Calu3 (cell line): ENCODE measurements at regions of chr1 and their contacts with region 1.

Region 1: GRCh38 chr1:68232354-68233148 is at the start of gene WLS:
- DNase-seq: peak; percentile 65
- H3K4me3 Mint-ChIP-seq: peak within 1 kb of the TSS; percentile 96
- H3K27ac Mint-ChIP-seq: peak within 1 kb of the TSS; percentile 17
- H3K4me1 Mint-ChIP-seq: peaks cover 19% of the 10 kb centered on the region
- H3K27me3 Mint-ChIP-seq: no peaks in the 10 kb centered on the region
- CTCF ChIP-seq: no peak
- total RNA-seq, gene WLS: 50.9 and 57.3 TPM in 2 replicates

Region 2: DNA sequence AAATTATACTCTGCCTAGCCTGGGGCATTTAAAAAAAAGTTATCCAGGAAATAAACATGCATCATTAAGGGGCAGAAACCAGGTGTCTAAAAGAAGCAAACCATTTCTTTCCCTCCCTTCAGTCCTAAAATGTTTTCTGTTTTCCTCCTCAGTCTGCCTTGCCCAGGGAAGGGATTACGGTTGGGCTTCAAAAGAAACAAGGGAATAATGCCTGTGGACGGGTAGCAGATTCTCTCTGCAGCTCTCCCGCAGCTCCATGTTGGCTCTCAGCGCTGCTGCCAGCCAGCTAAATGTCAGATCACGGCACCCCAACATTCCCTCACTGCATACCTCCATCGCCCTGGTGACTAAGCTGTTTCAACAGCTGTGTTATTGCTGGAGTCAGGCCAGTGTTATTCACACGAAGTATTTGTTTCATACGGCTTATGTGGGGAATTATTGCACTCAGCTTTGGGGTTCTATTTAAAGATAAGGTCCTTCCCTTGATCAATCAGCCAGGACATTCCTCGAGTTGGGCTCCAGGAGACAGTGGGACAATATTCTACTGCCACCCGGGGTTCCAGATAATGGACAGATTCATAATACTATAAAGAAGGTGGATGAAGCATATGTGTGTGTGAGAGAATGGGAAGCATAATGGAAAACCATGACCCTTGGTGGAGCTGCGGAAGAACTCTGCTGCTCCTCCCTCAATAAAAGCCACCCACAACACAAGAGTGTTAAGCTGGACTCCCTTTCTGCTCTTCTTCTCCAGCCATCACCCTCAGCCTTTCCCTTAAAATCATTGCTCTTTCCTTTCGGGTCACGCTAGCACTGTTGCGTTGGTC is 58.4 kb before region 1 on chr1:
- CTCF ChIA-PET with region 1: interaction called, 13 read pairs
- intact Hi-C with region 1: loop called (anchors 5 kb)
- DNase-seq: peak; percentile 74
- H3K4me3 Mint-ChIP-seq: peak overlapping the region; percentile 56
- H3K27ac Mint-ChIP-seq: peak overlapping the region; percentile 90
- H3K4me1 Mint-ChIP-seq: peaks cover 76% of the 10 kb centered on the region
- H3K27me3 Mint-ChIP-seq: no peaks in the 10 kb centered on the region
- CTCF ChIP-seq: no peak

Region 3: DNA sequence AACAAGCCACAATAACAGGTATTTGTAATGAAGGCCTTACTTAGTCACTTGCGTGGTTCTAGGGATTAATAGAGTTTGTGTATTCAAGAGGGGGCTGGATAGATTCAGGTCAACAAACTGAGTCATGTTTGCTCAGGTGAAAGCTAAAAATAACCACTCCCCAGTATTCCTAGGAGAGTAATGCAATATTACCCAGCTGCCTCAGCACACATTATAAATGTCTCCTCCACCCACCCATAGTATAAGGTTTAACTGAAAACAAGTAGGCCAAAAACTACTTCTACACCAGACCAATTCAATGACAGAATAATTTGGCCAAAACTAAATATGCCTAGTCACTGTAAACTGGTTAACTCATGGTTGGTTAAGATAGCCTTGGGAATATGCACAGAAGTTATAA is 34.7 kb before region 1 on chr1:
- CTCF ChIA-PET with region 1: interaction called, 5 read pairs
- intact Hi-C with region 1: loop called (anchors 5 kb)
- DNase-seq: peak; percentile 24
- H3K4me3 Mint-ChIP-seq: no peak overlapping the region
- H3K27ac Mint-ChIP-seq: peak overlapping the region; percentile 89
- H3K4me1 Mint-ChIP-seq: peaks cover 32% of the 10 kb centered on the region
- H3K27me3 Mint-ChIP-seq: no peaks in the 10 kb centered on the region
- CTCF ChIP-seq: no peak

Region 4: GRCh38 chr1:68321084-68321685 is 88.6 kb after region 1 on chr1:
- CTCF ChIA-PET with region 1: interaction called, 10 read pairs
- intact Hi-C with region 1: loop called (anchors 2 kb)
- DNase-seq: peak; percentile 84
- H3K4me3 Mint-ChIP-seq: no peak overlapping the region
- H3K27ac Mint-ChIP-seq: no peak overlapping the region
- H3K4me1 Mint-ChIP-seq: peaks cover 5% of the 10 kb centered on the region
- H3K27me3 Mint-ChIP-seq: no peaks in the 10 kb centered on the region
- CTCF ChIP-seq: peak; percentile 74